H1 (cell line): ENCODE measurements at regions of chr17 and their contacts with region 1.

Region 1: GRCh38 chr17:63611354-63611753 is 10.7 kb downstream of the TACO1 start:
- DNase-seq: no peak
- H3K4me3 ChIP-seq: no peak overlapping the region
- H3K27ac ChIP-seq: no peak overlapping the region
- H3K4me1 ChIP-seq: no peaks in the 10 kb centered on the region
- H3K27me3 ChIP-seq: no peaks in the 10 kb centered on the region
- CTCF ChIP-seq: no peak
- EP300 ChIP-seq: no peak
- POLR2A ChIP-seq: no peak
- RAD21 ChIP-seq: no peak

Region 2: DNA sequence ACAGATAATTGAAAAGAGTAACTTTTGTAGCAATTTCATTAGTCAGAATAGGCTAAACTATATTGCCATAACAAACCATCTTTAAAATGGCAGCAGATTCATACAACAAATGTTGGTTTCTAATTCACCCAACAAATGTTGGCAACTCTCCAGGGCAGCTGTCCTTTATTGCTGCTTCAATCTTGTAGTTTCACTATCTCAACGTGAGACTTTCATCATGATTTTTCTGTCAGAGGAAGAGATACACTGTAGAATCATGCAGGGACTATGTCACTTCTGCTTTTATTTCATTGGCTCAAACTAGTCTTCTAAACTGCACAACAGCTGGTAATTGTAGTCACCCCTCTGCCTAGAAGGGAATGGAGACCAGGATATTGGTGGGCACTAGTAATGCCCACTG is 471.1 kb before region 1 on chr17:
- CTCF ChIA-PET with region 1: no interaction called
- POLR2A ChIA-PET with region 1: no interaction called
- DNase-seq: no peak
- H3K4me3 ChIP-seq: no peak overlapping the region
- H3K27ac ChIP-seq: no peak overlapping the region; the same call in 1 of the 2 replicates
- H3K4me1 ChIP-seq: peaks cover 0 to 13% (median 5%) of the 10 kb centered on the region in 4 experiments; a peak in 4 of 7 replicates
- H3K27me3 ChIP-seq: no peaks in the 10 kb centered on the region
- CTCF ChIP-seq: no peak
- EP300 ChIP-seq: no peak
- POLR2A ChIP-seq: no peak
- RAD21 ChIP-seq: no peak

Region 3: GRCh38 chr17:63445979-63446691 is 165.2 kb before region 1 on chr17 and contains the start of gene CYB561:
- CTCF ChIA-PET with region 1: interaction called, 42 read pairs
- POLR2A ChIA-PET with region 1: no interaction called
- DNase-seq: peak in 1 of 2 experiments; percentile 92
- H3K4me3 ChIP-seq: peak within 1 kb of the TSS; percentile 49 to 74 (median 55)
- H3K27ac ChIP-seq: no peak within 1 kb of the TSS; the same call in 1 of the 2 replicates
- H3K4me1 ChIP-seq: peaks cover 0 to 20% (median 10%) of the 10 kb centered on the region in 4 experiments; a peak in 6 of 7 replicates
- H3K27me3 ChIP-seq: peaks cover 0 to 10% (median 2%) of the 10 kb centered on the region in 4 experiments; a peak in 2 of 7 replicates
- CTCF ChIP-seq: peak; percentile 56 to 86 (median 68)
- EP300 ChIP-seq: no peak
- POLR2A ChIP-seq: peak in 1 of 2 experiments; percentile 37; a peak in 1 of 3 replicates
- RAD21 ChIP-seq: peak; percentile 20 to 39; a peak in 2 of 4 replicates
- total RNA-seq, gene CYB561: 23.4 and 26.0 TPM in 2 replicates

Region 4: GRCh38 chr17:63497708-63498483 is 113.5 kb before region 1 on chr17:
- CTCF ChIA-PET with region 1: interaction called, 16 read pairs
- POLR2A ChIA-PET with region 1: no interaction called
- DNase-seq: peak in 1 of 2 experiments; percentile 81
- H3K4me3 ChIP-seq: no peak overlapping the region
- H3K27ac ChIP-seq: no peak overlapping the region
- H3K4me1 ChIP-seq: peaks cover 0 to 6% (median 0%) of the 10 kb centered on the region in 4 experiments; a peak in 1 of 7 replicates
- H3K27me3 ChIP-seq: no peaks in the 10 kb centered on the region
- CTCF ChIP-seq: peak; percentile 39 to 61 (median 51)
- EP300 ChIP-seq: no peak
- POLR2A ChIP-seq: no peak
- RAD21 ChIP-seq: peak; percentile 12 to 38; a peak in 3 of 4 replicates

Region 5: DNA sequence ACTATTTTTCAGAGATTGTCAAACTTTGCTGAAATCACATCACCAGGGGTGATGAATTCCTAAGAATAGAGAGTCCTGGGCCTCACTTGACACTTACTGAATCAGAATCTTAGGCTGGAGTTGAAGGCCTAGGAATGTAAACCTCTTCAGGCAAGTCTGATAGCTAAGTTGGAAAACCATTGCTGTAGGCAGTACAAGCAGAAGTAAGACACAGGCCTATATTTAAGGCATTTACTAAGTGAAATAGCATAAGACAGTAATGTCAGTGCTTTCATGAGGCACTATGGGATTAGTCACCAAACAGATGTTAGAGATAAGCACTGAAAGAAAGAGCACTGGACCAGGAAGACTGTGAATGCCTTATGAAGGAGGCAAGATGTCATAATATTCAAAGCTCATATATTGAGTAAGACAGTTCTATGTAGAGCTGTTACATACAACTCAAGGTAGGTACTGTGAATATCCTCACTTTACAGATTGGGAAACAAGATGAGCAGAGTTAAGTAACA is 39.5 kb before region 1 on chr17:
- CTCF ChIA-PET with region 1: interaction called, 25 read pairs
- POLR2A ChIA-PET with region 1: no interaction called
- DNase-seq: no peak
- H3K4me3 ChIP-seq: no peak overlapping the region
- H3K27ac ChIP-seq: no peak overlapping the region
- H3K4me1 ChIP-seq: no peaks in the 10 kb centered on the region; a peak in 1 of 7 replicates
- H3K27me3 ChIP-seq: no peaks in the 10 kb centered on the region
- CTCF ChIP-seq: no peak
- EP300 ChIP-seq: no peak
- POLR2A ChIP-seq: no peak
- RAD21 ChIP-seq: no peak

Region 6: DNA sequence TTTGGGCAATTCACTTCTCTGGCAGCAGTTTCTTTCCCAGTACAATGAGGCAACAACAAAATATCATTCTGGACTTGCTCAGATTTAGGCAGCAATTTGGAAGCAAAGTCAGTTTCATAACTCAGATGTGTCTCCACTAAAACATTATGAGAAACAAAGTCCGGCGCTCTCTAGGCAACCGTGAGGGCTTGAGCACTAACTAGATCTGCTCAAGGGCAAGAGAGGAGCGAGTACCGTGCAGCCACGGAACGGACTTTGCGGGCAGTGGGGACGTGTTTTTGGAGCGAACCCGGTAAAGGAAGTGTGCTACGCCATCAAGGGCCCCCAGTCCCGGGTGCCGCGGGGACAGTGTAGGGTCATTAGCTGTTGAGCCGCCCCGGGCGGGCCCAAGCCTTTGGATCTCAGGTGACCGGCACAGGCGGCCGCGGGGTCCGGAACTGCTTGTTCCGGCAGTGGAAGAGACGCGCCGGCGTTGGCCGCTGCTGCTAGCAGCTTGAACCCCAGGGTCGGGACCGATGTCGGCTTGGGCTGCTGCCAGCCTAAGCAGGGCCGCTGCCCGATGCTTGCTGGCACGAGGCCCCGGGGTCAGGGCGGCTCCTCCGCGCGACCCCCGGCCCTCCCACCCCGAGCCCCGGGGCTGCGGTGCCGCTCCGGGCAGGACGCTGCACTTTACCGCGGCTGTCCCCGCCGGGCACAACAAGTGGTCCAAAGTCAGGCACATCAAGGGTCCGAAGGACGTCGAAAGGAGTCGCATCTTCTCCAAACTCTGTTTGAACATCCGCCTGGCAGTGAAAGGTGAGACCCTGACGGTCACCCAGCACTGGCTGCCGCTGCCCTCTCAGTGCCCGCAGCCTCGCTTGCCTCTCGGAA is 10.6 kb before region 1 on chr17 and contains the start of gene TACO1:
- CTCF ChIA-PET with region 1: interaction called, 42 read pairs
- POLR2A ChIA-PET with region 1: interaction called, 18 read pairs
- DNase-seq: peak; percentile 56 to 95
- H3K4me3 ChIP-seq: peak within 1 kb of the TSS; percentile 74 to 85 (median 78)
- H3K27ac ChIP-seq: no peak within 1 kb of the TSS
- H3K4me1 ChIP-seq: peaks cover 0 to 3% (median 3%) of the 10 kb centered on the region in 4 experiments; a peak in 4 of 7 replicates
- H3K27me3 ChIP-seq: no peaks in the 10 kb centered on the region
- CTCF ChIP-seq: no peak
- EP300 ChIP-seq: peak in 1 of 2 experiments; percentile 54; a peak in 1 of 3 replicates
- POLR2A ChIP-seq: peak; percentile 78 to 87
- RAD21 ChIP-seq: peak; percentile 11 to 19; a peak in 1 of 4 replicates
- total RNA-seq, gene TACO1: 23.6 and 24.0 TPM in 2 replicates

Region 7: GRCh38 chr17:63634163-63634562 is 22.8 kb after region 1 on chr17:
- CTCF ChIA-PET with region 1: interaction called, 12 read pairs
- POLR2A ChIA-PET with region 1: no interaction called
- DNase-seq: no peak
- H3K4me3 ChIP-seq: no peak overlapping the region
- H3K27ac ChIP-seq: peak overlapping the region; percentile 20; the same call in 1 of the 2 replicates
- H3K4me1 ChIP-seq: peaks cover 0 to 6% (median 4%) of the 10 kb centered on the region in 4 experiments; a peak in 4 of 7 replicates
- H3K27me3 ChIP-seq: no peaks in the 10 kb centered on the region
- CTCF ChIP-seq: no peak
- EP300 ChIP-seq: no peak
- POLR2A ChIP-seq: no peak
- RAD21 ChIP-seq: no peak

Region 8: GRCh38 chr17:63697341-63698286 is 86.3 kb after region 1 on chr17:
- CTCF ChIA-PET with region 1: interaction called, 29 read pairs
- POLR2A ChIA-PET with region 1: interaction called, 4 read pairs
- DNase-seq: peak in 1 of 2 experiments; percentile 82
- H3K4me3 ChIP-seq: peak overlapping the region in 1 of 4 experiments; percentile 83; a peak in 2 of 8 replicates
- H3K27ac ChIP-seq: no peak overlapping the region
- H3K4me1 ChIP-seq: peaks cover 3 to 25% (median 17%) of the 10 kb centered on the region in 4 experiments; a peak in 6 of 7 replicates
- H3K27me3 ChIP-seq: peaks cover 0 to 5% (median 0%) of the 10 kb centered on the region in 4 experiments; a peak in 3 of 7 replicates
- CTCF ChIP-seq: peak; percentile 76 to 82 (median 76)
- EP300 ChIP-seq: no peak
- POLR2A ChIP-seq: no peak; a peak in 2 of 3 replicates
- RAD21 ChIP-seq: peak; percentile 43 to 47